ENCODE measurements at regions of chr1 and their contacts with region 1.

Region 1: GRCh38 chr1:40153073-40153770 is 8.0 kb upstream of the RLF start:
- DNase-seq: peak; percentile 16
- H3K27ac ChIP-seq: no peak overlapping the region
- CTCF ChIP-seq: peak; percentile 81

Region 2: GRCh38 chr1:40305457-40305856 is 152.2 kb after region 1 on chr1:
- CTCF ChIA-PET with region 1: interaction called, 11 read pairs
- POLR2A ChIA-PET with region 1: no interaction called
- DNase-seq: peak; percentile 21
- H3K27ac ChIP-seq: no peak overlapping the region
- CTCF ChIP-seq: no peak

Region 3: DNA sequence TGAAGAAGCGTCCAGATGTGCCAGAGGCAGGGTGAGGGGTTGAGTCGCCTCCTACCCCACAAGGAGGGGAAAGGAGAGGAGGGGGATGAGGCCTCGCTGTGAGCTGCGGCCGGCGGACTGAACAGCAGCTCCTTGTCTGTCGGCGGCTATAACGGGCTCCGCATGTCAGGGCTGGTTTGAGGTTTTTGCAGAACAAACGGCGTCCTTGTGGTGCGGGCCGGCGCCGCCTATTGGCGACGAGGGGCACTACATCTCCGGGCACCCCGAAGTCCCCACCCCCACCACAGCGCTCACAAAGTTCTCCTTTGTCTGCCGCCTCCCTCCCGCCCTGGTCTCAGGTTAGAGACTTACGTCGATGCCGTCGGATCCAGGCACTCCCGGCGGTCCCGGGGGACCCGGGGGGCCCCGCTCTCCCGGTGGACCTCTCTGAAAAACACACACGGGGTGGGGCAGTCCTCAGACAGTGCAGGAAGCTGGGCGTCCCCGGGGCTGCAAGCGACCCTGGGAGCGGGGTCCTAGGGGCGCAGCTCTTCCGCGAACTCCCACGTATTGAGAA is 162.1 kb after region 1 on chr1:
- CTCF ChIA-PET with region 1: interaction called, 16 read pairs
- POLR2A ChIA-PET with region 1: no interaction called
- DNase-seq: peak; percentile 79
- H3K27ac ChIP-seq: no peak overlapping the region
- CTCF ChIP-seq: peak; percentile 81

Region 4: DNA sequence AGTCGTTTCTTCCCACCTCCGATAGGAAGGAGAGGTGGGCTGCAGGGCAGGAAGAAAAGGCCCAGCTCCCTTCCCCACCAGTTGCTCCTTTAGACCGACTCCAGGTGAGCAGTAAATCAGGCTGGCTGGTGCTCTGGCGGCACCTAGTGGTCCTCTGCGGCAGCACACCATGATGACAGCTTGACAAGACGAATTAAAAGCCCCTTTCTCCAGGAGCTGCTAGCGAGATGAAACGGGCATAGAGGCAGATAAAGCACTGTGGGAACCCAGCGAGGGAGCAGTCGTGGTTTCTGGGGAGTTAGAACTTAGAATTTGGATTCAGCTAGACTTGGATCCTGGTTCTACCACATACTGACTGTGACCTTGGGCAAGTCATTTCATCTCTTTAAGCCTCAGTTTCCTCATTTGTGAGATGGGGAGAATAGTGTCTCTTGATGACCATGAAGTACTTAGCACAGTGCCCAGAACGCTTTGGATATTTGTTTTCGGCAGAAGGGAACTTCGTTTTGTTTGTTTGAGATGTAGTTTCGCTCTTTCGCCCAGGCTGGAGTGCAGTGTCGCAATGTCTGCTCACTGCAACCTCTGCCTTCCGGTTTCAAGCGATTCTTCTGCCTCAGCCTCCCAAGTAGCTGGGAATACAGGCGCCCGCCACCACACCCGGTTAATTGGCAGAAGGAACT is 185.7 kb after region 1 on chr1:
- CTCF ChIA-PET with region 1: interaction called, 55 read pairs
- POLR2A ChIA-PET with region 1: no interaction called
- DNase-seq: peak; percentile 80
- H3K27ac ChIP-seq: no peak overlapping the region
- CTCF ChIP-seq: peak; percentile 98

Measured in RWPE1 (cell line).